ENCODE measurements at regions of chr10 and their contacts with region 1.

Region 1: DNA sequence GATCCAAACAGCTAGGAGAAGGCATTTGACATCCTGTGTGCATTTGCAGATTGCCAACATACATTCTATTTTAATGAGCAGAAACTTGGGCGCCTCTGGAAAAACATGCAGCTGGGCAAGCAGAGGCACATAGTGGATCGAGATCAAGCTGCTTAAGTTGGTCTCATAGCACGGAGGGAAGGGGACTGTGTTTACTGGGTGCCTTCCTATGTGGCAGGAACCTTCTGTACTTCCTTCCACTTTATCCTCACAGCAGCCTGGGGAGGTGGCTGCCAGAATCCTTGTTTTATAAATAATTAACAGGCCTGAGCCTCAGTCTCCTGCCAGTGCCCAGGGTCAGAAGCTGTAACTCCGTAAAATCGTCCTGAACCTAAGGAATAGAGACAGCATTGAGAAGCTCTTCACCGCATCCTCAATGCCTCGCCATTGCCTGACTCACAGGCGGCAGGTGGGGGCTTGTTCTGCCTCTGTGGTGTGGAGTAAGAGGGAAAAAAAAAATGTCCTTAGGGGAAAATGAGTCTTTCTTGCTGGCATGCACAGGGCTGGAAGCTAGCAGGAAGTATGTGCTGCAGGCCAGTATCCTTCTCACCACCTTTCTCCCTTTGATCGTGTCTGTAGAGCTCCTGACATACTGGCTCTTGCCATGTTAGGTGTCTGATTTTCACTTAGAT is 6.2 kb downstream of the VWA2 start:
- DNase-seq: peak; percentile 60 to 87
- H3K4me3 ChIP-seq: no peak overlapping the region
- H3K27ac ChIP-seq: peak overlapping the region; percentile 96
- H3K4me1 ChIP-seq: peaks cover 32% of the 10 kb centered on the region
- H3K27me3 ChIP-seq: no peaks in the 10 kb centered on the region
- CTCF ChIP-seq: no peak

Region 2: GRCh38 chr10:114151486-114151885 is 93.8 kb before region 1 on chr10:
- CTCF ChIA-PET with region 1: no interaction called
- POLR2A ChIA-PET with region 1: no interaction called
- intact Hi-C with region 1: no loop called
- DNase-seq: peak; percentile 16 to 73
- H3K4me3 ChIP-seq: no peak overlapping the region
- H3K27ac ChIP-seq: peak overlapping the region; percentile 54; the same call in 1 of the 2 replicates
- H3K4me1 ChIP-seq: peaks cover 10% of the 10 kb centered on the region
- H3K27me3 ChIP-seq: no peaks in the 10 kb centered on the region
- CTCF ChIP-seq: no peak

Region 3: GRCh38 chr10:114173921-114174694 is 71.1 kb before region 1 on chr10 and contains the start of gene CCDC186:
- CTCF ChIA-PET with region 1: no interaction called
- POLR2A ChIA-PET with region 1: no interaction called
- intact Hi-C with region 1: loop called (anchors 1 kb)
- DNase-seq: peak; percentile 90 to 95
- H3K4me3 ChIP-seq: peak within 1 kb of the TSS; percentile 89
- H3K27ac ChIP-seq: peak within 1 kb of the TSS; percentile 92
- H3K4me1 ChIP-seq: peaks cover 32% of the 10 kb centered on the region
- H3K27me3 ChIP-seq: no peaks in the 10 kb centered on the region
- CTCF ChIP-seq: no peak
- total RNA-seq, gene CCDC186: 14.3 and 15.6 TPM in 2 replicates

Region 4: GRCh38 chr10:114208351-114208750 is 36.9 kb before region 1 on chr10:
- CTCF ChIA-PET with region 1: no interaction called
- POLR2A ChIA-PET with region 1: no interaction called
- intact Hi-C with region 1: no loop called
- DNase-seq: peak in 1 of 2 experiments; percentile 12
- H3K4me3 ChIP-seq: no peak overlapping the region
- H3K27ac ChIP-seq: no peak overlapping the region
- H3K4me1 ChIP-seq: no peaks in the 10 kb centered on the region
- H3K27me3 ChIP-seq: no peaks in the 10 kb centered on the region
- CTCF ChIP-seq: no peak

Region 5: GRCh38 chr10:114271779-114272167 is 26.5 kb after region 1 on chr10:
- CTCF ChIA-PET with region 1: no interaction called
- POLR2A ChIA-PET with region 1: no interaction called
- intact Hi-C with region 1: loop called (anchors 2 kb)
- DNase-seq: peak; percentile 40 to 80
- H3K4me3 ChIP-seq: no peak overlapping the region
- H3K27ac ChIP-seq: no peak overlapping the region
- H3K4me1 ChIP-seq: 0 out of 2 replicates have a peak, but pooled peaks cover 10% of the 10 kb centered on the region
- H3K27me3 ChIP-seq: no peaks in the 10 kb centered on the region
- CTCF ChIP-seq: no peak

Region 6: GRCh38 chr10:114412907-114413386 is 167.7 kb after region 1 on chr10:
- CTCF ChIA-PET with region 1: no interaction called
- POLR2A ChIA-PET with region 1: no interaction called
- intact Hi-C with region 1: loop called (anchors 5 kb)
- DNase-seq: peak; percentile 63 to 95
- H3K4me3 ChIP-seq: no peak overlapping the region; the same call in 1 of the 2 replicates
- H3K27ac ChIP-seq: peak overlapping the region; percentile 88
- H3K4me1 ChIP-seq: peaks cover 45% of the 10 kb centered on the region
- H3K27me3 ChIP-seq: no peaks in the 10 kb centered on the region
- CTCF ChIP-seq: no peak

Measured in PC-9 (cell line).